ENCODE measurements at regions of chr9 and their contacts with region 1.

Region 1: DNA sequence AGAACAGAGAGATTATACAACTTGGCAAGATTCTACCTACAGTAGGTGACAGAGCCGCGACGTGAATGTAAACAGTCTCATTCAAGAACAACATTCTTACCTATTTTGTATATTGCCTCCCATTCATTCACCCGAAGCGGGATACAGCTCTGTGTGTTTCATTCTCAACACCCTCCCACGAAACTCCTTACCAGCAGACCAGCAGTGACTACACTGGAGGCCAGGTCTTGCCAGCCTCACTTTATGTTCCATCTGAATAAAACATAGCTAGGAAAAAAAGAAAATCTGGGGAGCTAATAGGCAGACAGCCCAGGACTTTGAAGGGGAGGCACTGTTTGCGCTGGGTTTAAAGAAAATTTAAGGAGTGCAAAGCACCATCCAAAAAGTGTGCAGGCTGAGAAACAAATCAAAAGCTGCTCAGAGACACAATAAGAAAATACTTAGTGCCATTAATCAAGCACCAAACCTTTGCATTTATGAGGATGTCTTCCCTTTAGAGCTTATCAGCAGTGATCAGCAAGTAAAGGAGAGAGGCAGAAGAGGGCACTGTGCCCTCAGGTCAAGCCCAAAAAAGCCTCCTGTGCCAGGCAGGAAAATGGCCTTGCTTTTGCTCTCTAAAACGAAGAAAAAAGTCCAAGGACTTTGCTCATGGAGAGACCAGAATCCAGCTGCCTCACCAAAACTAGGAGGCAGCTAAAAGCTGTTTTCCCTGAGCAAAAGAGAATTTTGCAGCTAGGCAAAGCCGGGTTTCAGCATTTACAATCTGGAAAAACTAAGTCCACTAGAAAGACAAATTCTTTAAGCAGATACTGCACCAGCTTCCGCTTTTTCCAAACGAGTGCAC is 295.1 kb downstream of the BNC2 start:
- DNase-seq: no peak
- H3K4me3 ChIP-seq: no peak overlapping the region
- H3K27ac ChIP-seq: no peak overlapping the region
- H3K4me1 ChIP-seq: peaks cover 0 to 5% of the 10 kb centered on the region in 2 donors
- H3K27me3 ChIP-seq: no peaks in the 10 kb centered on the region
- CTCF ChIP-seq: peak in 1 of 3 experiments; percentile 23

Region 2: GRCh38 chr9:16509997-16510396 is 65.4 kb before region 1 on chr9:
- intact Hi-C with region 1: loop called (anchors 10 kb)
- DNase-seq: no peak
- H3K4me3 ChIP-seq: no peak overlapping the region
- H3K27ac ChIP-seq: peak overlapping the region in 1 of 2 donors; percentile 27
- H3K4me1 ChIP-seq: no peaks in the 10 kb centered on the region
- H3K27me3 ChIP-seq: no peaks in the 10 kb centered on the region
- CTCF ChIP-seq: no peak

Region 3: DNA sequence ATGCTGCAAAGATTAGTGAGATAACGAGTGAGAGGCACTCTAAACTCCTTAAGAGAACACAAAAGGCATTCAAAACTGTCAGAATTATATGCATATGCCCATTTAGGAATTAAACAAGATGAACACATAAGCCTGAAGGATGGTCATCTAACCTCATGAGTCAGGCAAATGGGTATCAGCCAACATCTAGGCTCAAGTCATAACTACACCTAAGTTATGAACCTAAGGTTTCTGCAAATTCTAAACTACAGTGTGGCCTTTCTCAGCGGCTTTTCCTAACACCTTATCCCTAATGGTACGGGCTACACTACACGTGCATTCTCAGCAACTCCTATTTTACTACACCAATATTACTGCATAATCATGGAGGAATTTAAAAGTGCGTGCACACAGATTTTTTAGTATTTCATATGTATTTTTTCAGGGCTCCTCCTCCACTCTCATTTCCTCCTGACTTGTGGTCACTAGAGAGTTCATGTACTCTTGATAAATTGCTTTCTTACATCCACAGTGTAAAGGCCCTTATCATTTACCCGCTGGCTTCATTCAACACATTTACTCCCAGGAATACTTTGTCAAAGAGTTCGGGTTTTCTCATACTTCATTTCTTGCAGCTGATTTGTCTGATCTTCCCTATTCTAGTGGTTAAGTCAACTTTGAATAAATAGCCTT is 21.4 kb before region 1 on chr9:
- intact Hi-C with region 1: no loop called
- DNase-seq: no peak
- H3K4me3 ChIP-seq: no peak overlapping the region
- H3K27ac ChIP-seq: no peak overlapping the region
- H3K4me1 ChIP-seq: no peaks in the 10 kb centered on the region
- H3K27me3 ChIP-seq: no peaks in the 10 kb centered on the region
- CTCF ChIP-seq: no peak

Region 4: GRCh38 chr9:16726718-16727451 is 151.5 kb after region 1 on chr9:
- intact Hi-C with region 1: loop called (anchors 5 kb)
- DNase-seq: peak in 1 of 2 donors; percentile 91
- H3K4me3 ChIP-seq: peak overlapping the region; percentile 69 to 76
- H3K27ac ChIP-seq: peak overlapping the region; percentile 92 to 95
- H3K4me1 ChIP-seq: peaks cover 0 to 2% of the 10 kb centered on the region in 2 donors
- H3K27me3 ChIP-seq: no peaks in the 10 kb centered on the region
- CTCF ChIP-seq: no peak

Measured in ascending aorta (tissue), 2 donors.